Cardiac septum (tissue), 1 donor: ENCODE measurements at regions of chr1 and their contacts with region 1.

Region 1: DNA sequence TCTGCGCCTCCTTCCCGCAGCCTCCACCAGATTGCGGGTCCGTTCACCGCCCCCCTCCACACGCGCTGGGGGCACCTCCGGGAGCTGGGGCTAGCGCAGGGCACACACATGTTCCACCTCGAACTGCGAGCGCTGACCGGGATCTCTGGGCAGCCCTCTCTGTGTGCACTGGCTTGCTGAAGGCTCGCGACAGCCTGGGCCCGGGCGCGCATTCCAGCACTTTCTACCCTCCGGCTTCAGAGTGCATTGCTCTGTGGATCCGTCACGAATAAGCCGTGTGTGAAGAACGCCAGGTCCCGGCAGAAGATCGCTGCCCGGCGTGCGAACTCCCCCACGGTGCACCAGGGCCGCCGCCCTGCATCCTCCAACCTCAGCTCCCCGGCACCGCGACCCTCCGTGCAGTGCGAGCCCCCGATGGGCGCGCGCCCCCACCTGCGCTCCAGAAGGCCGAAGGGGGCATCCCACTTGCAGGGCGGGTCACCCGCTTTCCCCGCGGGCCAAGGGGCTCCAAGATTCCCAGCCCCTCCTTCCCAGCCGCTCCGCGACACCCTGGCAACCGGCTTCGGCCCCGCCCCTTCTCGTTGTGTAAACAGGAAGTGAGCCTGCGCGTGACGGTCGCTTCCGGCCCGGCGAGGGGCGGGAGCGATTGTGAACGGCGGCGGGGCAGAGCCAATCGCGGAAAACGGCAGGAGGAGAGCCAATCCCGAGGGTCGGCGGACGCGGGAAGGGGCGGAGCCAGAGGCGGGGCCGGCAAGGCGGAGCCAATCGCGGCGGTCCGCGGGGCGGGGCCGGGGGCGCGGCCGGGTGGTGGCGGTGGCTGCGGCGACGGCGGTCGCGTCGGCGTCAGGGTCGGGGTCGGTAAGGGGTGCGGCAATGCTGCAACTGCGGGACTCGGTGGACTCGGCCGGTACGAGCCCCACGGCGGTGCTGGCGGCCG is at the start of gene TPRG1L:
- DNase-seq: peak; percentile 99
- total RNA-seq, gene TPRG1L: 44.3 TPM

Region 2: DNA sequence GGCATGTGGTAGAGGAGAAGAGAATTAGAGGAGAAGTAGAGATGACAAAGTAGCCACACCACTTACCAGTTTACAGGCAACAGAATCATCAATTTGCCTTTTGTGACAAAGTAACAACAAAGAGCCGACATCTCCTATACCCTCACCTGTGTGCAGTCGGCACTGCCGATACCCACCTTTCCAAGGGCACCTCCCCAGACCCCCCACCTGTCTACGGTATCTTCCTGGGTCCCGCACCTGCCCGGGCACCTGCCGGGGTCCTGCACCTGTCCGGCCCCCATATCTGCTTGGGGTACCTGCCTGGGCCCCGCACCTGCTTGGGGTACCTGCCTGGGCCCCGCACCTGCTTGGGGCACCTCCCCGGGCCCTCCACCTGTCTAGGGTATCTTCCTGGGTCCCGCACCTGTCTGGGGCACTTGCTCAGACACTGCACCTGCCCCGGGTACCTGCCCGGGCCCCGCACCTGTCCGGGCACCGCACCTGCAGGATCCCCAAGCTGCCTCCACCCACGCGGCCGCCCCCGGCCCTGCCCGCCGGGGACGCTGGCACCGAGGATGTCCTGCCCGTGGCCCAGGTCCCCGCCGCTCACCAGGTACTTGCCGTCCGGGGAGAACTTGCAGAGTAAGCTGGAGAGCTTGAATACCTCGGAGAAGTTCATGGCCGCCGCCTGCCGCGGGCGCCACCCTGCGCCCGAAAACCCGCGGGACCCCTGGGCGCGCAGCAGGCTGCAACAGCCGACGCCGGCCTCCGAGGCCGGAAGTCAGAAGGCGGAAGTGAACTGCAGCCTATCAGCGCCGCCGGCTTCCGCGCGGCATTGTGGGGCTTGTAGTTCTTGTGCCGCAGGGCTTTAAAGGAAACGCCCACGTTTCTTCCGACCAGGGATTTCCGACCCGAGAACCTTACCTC is 25.1 kb after region 1 on chr1 and contains the start of gene WRAP73:
- intact Hi-C with region 1: loop called (anchors 2 kb)
- DNase-seq: peak; percentile 94
- total RNA-seq, gene WRAP73: 14.3 TPM

Region 3: GRCh38 chr1:3695326-3696217 is 71.1 kb after region 1 on chr1:
- intact Hi-C with region 1: no loop called
- DNase-seq: peak; percentile 80

Region 4: DNA sequence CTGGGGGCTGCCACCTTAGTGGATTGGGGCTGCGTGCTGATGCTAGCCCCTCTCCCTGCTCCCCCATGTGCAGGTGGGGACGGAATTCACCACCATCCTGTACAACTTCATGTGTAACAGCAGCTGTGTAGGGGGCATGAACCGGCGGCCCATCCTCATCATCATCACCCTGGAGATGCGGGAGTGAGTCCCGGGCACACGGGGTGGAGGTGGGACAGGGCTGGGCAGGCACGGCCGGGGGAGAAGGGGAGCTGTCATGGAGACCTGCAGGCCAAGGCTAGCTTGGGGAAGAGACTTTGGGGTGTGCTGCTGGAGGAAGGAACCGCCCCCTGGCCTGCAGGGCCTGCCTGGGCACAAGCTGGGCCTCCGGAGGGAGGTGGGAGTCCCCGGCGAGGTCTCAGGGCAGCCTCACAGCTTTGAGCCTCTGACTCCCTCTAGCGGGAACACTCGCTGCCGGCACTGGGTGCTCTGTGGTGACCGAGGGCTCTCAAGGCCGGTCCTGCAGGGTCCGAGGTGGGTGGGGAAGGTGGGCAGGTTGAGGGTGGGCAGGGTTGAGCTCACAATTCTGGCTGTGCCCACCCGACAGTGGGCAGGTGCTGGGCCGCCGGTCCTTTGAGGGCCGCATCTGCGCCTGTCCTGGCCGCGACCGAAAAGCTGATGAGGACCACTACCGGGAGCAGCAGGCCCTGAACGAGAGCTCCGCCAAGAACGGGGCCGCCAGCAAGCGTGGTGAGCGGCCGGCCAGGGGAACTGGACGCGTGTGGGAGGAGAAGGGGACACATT is 102.8 kb after region 1 on chr1:
- intact Hi-C with region 1: loop called (anchors 10 kb)
- DNase-seq: no peak

Region 5: GRCh38 chr1:3796215-3797061 is 172.0 kb after region 1 on chr1 and contains the start of gene LRRC47:
- intact Hi-C with region 1: loop called (anchors 10 kb)
- DNase-seq: peak; percentile 98
- total RNA-seq, gene LRRC47: 63.1 TPM